ENCODE measurements at regions of chr1 and their contacts with region 1.

Region 1: GRCh38 chr1:156625436-156626078 is 6.3 kb downstream of the HAPLN2 start:
- DNase-seq: peak; percentile 66
- ATAC-seq: peak; percentile 40
- H3K4me3 Mint-ChIP-seq: peak overlapping the region; percentile 79
- H3K27ac Mint-ChIP-seq: no peak overlapping the region
- H3K4me1 Mint-ChIP-seq: peaks cover 6% of the 10 kb centered on the region
- H3K27me3 Mint-ChIP-seq: peaks cover 83% of the 10 kb centered on the region
- CTCF ChIP-seq: peak; percentile 94

Region 2: DNA sequence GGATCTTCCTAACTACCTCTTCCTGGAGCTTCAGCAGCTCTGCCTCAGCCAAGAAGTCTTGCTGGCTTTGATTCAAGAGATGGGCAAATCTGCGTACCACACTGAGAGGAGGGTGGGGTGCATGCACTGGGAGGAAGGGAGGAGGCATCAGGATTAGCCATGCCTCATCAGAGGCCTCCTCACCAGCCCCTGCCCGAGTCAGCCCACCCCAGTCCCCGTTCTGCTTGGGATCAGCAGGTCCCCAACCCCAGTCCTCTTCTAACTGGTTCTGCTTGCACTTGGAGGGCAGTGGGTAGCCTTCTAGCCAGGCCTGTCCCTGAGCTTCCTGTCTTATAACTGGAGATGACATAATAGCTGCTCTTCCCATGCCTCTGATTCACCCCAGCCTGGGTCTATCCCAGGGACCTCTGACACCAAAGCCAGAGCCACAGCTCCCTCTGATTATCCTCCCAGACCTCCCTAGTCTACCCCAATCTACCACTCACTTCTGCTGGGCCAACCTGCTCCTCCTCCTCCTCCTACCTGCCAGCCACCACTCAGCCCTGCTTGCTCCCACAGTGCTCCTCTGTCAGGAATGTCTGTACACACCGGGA is 84.7 kb before region 1 on chr1:
- CTCF ChIA-PET with region 1: no interaction called
- POLR2A ChIA-PET with region 1: no interaction called
- DNase-seq: no peak
- ATAC-seq: no peak
- H3K4me3 Mint-ChIP-seq: no peak overlapping the region
- H3K27ac Mint-ChIP-seq: no peak overlapping the region
- H3K4me1 Mint-ChIP-seq: peaks cover 9% of the 10 kb centered on the region; the same call in 1 of the 2 replicates
- H3K27me3 Mint-ChIP-seq: no peaks in the 10 kb centered on the region
- CTCF ChIP-seq: no peak

Region 3: DNA sequence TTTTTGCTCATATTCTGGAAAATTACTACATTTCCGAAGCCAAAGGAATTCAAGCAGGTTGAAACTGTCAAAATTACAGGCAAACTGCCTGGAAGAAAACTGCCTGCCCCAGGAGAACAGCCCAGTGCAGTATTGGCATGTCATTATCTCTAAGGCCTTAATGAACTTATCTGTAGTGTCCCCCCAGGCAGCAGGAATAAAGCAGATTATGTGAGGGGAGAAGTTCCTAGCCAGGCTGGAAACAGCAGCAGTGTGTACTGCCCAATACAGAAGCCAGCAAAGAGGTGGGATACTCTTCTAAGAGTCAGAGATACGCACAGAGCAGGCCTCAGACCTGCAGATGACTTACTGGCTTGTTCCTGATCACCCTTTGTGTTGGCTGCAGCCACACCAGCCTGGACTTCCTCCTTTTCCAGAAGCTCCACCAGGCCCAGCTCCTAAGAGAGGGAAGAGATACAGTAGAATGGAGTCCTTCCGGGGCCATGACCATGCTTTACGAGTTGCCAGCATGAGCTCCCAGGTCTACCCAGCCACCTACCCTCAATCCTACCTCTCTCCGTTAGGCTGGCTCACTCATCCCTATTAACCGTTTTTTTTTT is 64.9 kb before region 1 on chr1:
- CTCF ChIA-PET with region 1: no interaction called
- POLR2A ChIA-PET with region 1: no interaction called
- DNase-seq: no peak
- ATAC-seq: no peak
- H3K4me3 Mint-ChIP-seq: no peak overlapping the region
- H3K27ac Mint-ChIP-seq: no peak overlapping the region
- H3K4me1 Mint-ChIP-seq: no peaks in the 10 kb centered on the region
- H3K27me3 Mint-ChIP-seq: no peaks in the 10 kb centered on the region
- CTCF ChIP-seq: no peak

Region 4: GRCh38 chr1:156601122-156601830 is 24.3 kb before region 1 on chr1 and contains the start of gene GPATCH4:
- CTCF ChIA-PET with region 1: interaction called, 24 read pairs
- POLR2A ChIA-PET with region 1: no interaction called
- DNase-seq: peak; percentile 81
- ATAC-seq: peak; percentile 81
- H3K4me3 Mint-ChIP-seq: peak within 1 kb of the TSS; percentile 94
- H3K27ac Mint-ChIP-seq: peak within 1 kb of the TSS; percentile 98
- H3K4me1 Mint-ChIP-seq: peaks cover 13% of the 10 kb centered on the region
- H3K27me3 Mint-ChIP-seq: no peaks in the 10 kb centered on the region
- CTCF ChIP-seq: no peak
- total RNA-seq, gene GPATCH4: 37.1 to 50.1 TPM (median 38.2 TPM) in 3 replicates

Region 5: DNA sequence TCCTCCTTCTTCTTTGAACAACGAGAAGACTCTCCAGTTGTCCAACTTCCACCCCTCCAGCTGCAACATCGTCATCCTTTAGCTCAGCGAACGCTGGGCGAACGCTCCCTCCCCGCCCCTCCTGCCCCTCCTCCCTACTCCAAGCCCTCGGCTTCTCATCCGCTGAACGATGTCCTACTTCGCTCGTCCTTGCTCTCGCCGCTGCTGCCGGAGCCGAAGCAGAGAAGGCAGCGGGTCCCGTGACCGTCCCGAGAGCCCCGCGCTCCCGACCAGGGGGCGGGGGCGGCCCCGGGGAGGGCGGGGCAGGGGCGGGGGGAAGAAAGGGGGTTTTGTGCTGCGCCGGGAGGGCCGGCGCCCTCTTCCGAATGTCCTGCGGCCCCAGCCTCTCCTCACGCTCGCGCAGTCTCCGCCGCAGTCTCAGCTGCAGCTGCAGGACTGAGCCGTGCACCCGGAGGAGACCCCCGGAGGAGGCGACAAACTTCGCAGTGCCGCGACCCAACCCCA is 16.3 kb after region 1 on chr1 and contains the start of gene BCAN:
- CTCF ChIA-PET with region 1: interaction called, 180 read pairs
- POLR2A ChIA-PET with region 1: interaction called, 8 read pairs
- DNase-seq: peak; percentile 73
- ATAC-seq: peak; percentile 70
- H3K4me3 Mint-ChIP-seq: peak within 1 kb of the TSS; percentile 70
- H3K27ac Mint-ChIP-seq: no peak within 1 kb of the TSS
- H3K4me1 Mint-ChIP-seq: peaks cover 29% of the 10 kb centered on the region
- H3K27me3 Mint-ChIP-seq: peaks cover 92% of the 10 kb centered on the region
- CTCF ChIP-seq: no peak
- total RNA-seq, gene BCAN: 2.5 to 3.7 TPM (median 3.6 TPM) in 3 replicates

Region 6: DNA sequence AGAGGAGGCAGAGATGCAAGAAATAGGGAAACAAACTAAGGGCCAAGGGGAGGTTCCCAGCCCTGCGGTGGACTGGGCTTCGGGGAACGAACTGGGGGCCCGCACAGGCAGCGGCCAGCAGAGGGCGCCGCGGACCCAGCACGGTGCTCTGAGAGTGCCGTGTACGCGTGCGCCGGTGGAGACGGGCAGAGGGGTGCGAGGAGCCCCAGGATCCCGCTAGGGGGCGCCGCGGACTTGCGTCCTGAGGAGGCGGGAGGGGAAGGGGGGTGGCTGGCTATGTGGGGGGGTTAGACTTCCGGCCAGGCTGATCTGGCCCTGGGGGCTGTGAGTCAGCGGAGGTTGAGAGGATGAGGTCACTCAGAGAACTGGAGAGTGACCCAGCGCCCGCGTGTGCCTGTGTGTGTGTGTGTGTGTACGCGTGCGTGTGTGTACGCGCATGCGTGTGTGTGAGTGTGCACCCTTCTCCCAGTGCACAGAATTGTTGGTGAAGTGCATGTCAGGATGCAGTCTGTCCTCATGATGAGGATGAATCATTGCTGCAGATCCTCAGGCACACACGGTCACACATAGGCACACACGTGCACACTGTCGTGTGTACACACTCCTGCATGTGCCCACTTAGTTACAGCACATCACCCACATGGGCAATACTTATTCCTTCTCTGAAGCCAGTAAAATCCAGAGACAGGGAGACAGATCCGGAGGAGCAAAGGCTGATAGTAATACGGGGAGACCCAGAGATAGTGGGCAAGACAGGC is 34.6 kb after region 1 on chr1:
- CTCF ChIA-PET with region 1: interaction called, 365 read pairs
- POLR2A ChIA-PET with region 1: interaction called, 7 read pairs
- DNase-seq: peak; percentile 99
- ATAC-seq: peak; percentile 63
- H3K4me3 Mint-ChIP-seq: peak overlapping the region; percentile 35; the same call in 1 of the 2 replicates
- H3K27ac Mint-ChIP-seq: peak overlapping the region; percentile 99
- H3K4me1 Mint-ChIP-seq: peaks cover 83% of the 10 kb centered on the region
- H3K27me3 Mint-ChIP-seq: peaks cover 47% of the 10 kb centered on the region
- CTCF ChIP-seq: peak; percentile 95

Region 7: DNA sequence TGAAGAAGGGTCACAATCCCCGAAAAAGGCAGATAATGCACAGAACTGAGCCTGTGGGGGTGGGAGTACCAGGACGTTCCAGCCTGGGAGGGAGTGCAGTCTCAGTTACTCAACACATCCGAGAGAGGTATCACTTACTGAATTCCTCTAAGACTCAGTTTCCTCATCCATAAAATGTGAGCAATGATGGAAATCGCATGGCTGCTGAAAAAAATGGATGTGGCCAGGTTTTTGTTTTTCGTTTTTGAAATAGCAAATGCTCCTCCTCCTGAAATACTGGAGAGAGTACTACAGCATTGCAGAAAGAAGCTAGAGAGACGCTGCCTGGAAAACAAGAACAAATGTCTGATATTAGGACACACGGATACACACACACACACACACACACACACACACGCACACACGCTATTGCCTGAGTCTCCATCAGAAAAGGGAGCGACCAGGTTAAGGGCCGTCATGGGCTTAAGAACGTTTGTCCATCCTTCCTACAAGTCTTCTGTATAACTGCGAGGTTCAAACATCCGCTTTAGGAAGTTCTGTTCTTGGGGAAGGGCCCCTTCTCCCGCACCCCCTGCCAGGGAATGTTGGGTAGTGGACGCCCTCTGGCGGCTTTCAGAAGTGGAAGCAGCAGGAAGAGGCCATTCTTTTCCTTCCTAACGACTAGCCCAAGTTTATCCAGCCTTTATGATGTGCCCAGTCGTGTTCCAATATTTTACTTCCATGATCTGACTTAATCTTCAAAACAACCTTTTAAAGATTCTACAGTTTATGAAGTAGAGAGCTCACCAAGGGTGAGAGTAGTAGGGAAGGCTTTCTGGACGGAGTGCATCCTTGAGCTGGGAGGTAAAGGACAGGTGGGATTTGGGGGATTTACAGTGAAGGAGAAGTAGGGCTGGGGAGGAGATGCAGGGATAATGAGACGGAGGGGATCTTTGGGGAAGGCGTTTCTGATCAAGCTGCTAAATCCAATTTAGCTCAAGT is 52.3 kb after region 1 on chr1:
- CTCF ChIA-PET with region 1: interaction called, 134 read pairs
- POLR2A ChIA-PET with region 1: interaction called, 16 read pairs
- DNase-seq: peak; percentile 77
- ATAC-seq: peak; percentile 2
- H3K4me3 Mint-ChIP-seq: peak overlapping the region; percentile 76
- H3K27ac Mint-ChIP-seq: peak overlapping the region; percentile 82
- H3K4me1 Mint-ChIP-seq: peaks cover 57% of the 10 kb centered on the region
- H3K27me3 Mint-ChIP-seq: peaks cover 34% of the 10 kb centered on the region
- CTCF ChIP-seq: peak; percentile 76

Region 8: GRCh38 chr1:156945881-156946661 is 320.5 kb after region 1 on chr1:
- CTCF ChIA-PET with region 1: no interaction called
- POLR2A ChIA-PET with region 1: no interaction called
- DNase-seq: no peak
- ATAC-seq: no peak
- H3K4me3 Mint-ChIP-seq: no peak overlapping the region
- H3K27ac Mint-ChIP-seq: no peak overlapping the region
- H3K4me1 Mint-ChIP-seq: no peaks in the 10 kb centered on the region
- H3K27me3 Mint-ChIP-seq: no peaks in the 10 kb centered on the region
- CTCF ChIP-seq: no peak

Region 9: GRCh38 chr1:157415661-157416060 is 790.1 kb after region 1 on chr1:
- CTCF ChIA-PET with region 1: no interaction called
- POLR2A ChIA-PET with region 1: no interaction called
- DNase-seq: no peak
- ATAC-seq: no peak
- H3K4me3 Mint-ChIP-seq: no peak overlapping the region
- H3K27ac Mint-ChIP-seq: no peak overlapping the region
- H3K4me1 Mint-ChIP-seq: peaks cover 5% of the 10 kb centered on the region
- H3K27me3 Mint-ChIP-seq: peaks cover 4% of the 10 kb centered on the region
- CTCF ChIP-seq: no peak